Colonic mucosa (tissue), 4 donors: ENCODE measurements at regions of chr12 and their contacts with region 1.

Region 1: GRCh38 chr12:75390899-75391538 is at the start of gene GLIPR1L2:
- DNase-seq: peak; percentile 95
- H3K4me3 ChIP-seq: peak within 1 kb of the TSS; percentile 48
- H3K27ac ChIP-seq: peak within 1 kb of the TSS; percentile 80
- H3K4me1 ChIP-seq: no peaks in the 10 kb centered on the region
- H3K27me3 ChIP-seq: no peaks in the 10 kb centered on the region
- CTCF ChIP-seq: peak; percentile 71
- total RNA-seq, gene GLIPR1L2: 0.16 to 0.22 TPM

Region 2: DNA sequence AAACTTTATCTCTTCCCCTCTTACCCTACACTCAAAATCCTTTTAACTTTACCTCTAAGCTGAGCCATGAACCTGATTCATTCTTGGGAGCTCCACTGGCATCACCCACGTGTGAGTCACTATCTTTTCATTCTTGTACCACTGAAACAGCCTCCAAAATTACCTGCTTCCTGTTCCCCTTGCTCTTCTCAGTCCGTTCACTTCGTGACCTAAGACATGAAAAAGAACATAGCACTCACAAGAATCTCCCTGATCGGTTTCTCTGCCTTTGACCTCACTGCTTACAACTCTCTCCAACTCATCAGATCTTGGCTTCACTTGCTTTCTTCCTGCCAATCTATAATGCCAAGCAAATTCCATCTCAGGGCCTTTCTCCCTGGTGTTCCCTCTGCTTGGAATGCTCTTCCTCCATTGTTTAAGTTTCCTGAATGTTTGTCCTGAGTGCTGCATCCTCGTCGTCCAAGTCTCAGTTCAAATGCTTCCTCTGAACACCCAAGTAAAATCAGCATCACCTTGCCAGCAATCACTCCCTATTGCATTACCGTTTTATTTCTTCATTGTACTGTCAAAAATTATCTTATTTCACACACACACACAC is 98.7 kb after region 1 on chr12:
- intact Hi-C with region 1: loop called (anchors 5 kb)
- DNase-seq: no peak
- H3K4me3 ChIP-seq: no peak overlapping the region
- H3K27ac ChIP-seq: no peak overlapping the region
- H3K4me1 ChIP-seq: no peaks in the 10 kb centered on the region
- H3K27me3 ChIP-seq: no peaks in the 10 kb centered on the region
- CTCF ChIP-seq: no peak